ENCODE measurements at regions of chr16 and their contacts with region 1.

Region 1: DNA sequence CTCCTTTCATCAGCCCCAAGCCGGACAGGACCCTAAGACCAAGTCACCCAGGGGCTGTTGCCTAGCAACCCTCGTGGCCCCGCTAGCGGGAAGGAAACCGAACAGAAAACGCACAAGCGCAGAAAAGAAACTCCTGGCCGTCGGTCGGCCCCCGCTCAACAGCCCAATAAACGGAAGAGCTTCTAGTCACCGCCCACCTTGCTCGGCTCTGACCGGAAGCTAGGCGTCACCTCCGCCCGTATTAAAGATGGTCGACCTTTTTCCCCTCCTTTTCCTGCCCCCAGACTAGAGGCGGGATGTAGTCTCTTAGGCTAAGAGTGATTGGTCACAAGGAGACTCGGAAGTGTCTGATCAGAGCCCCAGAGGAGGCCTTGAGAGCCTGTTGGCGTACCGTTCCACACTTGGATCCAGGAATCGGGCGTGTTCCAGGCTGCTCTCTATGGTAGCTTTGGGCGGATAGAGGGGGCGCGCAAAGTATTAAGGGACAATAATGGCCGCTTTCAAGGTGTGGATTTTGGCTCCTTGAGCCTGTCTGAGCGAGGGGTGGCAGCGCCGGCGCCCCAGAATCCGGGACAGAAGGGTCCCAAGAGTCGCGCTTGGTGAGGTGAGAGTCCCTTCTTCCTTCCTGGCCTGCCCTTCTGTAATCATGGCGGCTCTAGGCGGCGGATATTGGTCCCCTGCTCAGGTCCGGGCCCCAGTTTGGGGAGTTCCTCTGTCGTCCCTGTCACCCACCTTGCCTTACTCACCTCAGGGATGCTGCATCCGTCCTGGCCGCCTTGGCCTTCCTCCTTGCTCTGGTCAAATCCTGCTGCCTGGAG is at the starts of genes DHX38 and TXNL4B:
- H3K4me3 Mint-ChIP-seq: peak within 1 kb of the TSS; percentile 98
- H3K27ac Mint-ChIP-seq: peak within 1 kb of the TSS; percentile 93
- H3K4me1 Mint-ChIP-seq: peaks cover 41% of the 10 kb centered on the region
- H3K27me3 Mint-ChIP-seq: no peaks in the 10 kb centered on the region

Region 2: DNA sequence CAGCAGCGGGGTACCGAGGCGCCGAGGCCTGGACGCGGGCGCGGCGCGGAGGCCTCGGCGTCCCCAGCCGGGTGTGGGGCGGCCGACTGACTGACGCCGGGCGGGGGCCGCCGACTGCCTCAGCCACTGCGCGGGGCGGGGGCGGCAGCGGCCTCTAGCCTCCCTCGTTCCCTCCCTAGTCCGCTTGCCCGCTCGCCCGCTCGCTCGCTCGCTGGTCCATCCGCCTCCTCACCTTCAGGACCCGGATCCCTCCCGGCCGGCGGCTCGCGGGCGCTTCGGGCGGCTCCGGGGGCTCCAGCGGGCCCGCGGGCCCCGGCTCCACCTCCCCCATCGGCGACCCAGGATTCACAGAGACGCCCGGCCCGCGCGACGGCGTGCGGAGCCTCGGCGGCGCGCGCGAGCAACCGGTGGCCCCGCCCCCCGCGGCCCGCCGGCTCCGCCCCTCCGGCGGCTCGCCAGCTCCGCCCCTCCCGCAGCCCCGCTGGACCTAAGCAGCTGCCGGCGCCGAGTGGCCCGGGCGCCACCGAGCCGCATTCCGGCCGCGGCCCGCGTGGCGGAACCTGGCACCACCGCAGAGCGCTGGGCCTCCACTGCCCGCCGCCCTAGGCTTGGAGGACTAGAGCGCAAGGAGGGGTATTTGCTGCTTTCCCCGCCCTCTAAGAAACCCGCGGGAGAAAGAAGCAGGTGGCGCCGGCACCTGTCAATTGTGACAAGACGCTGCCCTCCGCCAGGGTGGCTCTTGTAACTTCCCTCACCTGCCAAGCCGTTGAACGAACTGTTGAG is 369.9 kb before region 1 on chr16:
- intact Hi-C with region 1: loop called (anchors 10 kb)
- H3K4me3 Mint-ChIP-seq: peak overlapping the region; percentile 95
- H3K27ac Mint-ChIP-seq: no peak overlapping the region
- H3K4me1 Mint-ChIP-seq: peaks cover 38% of the 10 kb centered on the region
- H3K27me3 Mint-ChIP-seq: peaks cover 24% of the 10 kb centered on the region

Region 3: GRCh38 chr16:72008424-72009216 is 85.0 kb before region 1 on chr16 and contains the start of gene DHODH:
- intact Hi-C with region 1: loop called (anchors 1 kb)
- H3K4me3 Mint-ChIP-seq: peak within 1 kb of the TSS; percentile 91
- H3K27ac Mint-ChIP-seq: peak within 1 kb of the TSS; percentile 88
- H3K4me1 Mint-ChIP-seq: peaks cover 10% of the 10 kb centered on the region
- H3K27me3 Mint-ChIP-seq: peaks cover 7% of the 10 kb centered on the region

Region 4: GRCh38 chr16:72664509-72665225 is 571.0 kb after region 1 on chr16:
- intact Hi-C with region 1: loop called (anchors 10 kb)
- H3K4me3 Mint-ChIP-seq: peak overlapping the region; percentile 99
- H3K27ac Mint-ChIP-seq: peak overlapping the region; percentile 89
- H3K4me1 Mint-ChIP-seq: peaks cover 6% of the 10 kb centered on the region
- H3K27me3 Mint-ChIP-seq: no peaks in the 10 kb centered on the region